AG04449 (cell line): ENCODE measurements at regions of chr15 and their contacts with region 1.

Region 1: GRCh38 chr15:67080900-67081431 is 15.6 kb downstream of the SMAD3 start:
- DNase-seq: no peak
- H3K4me3 ChIP-seq: no peak overlapping the region
- CTCF ChIP-seq: peak; percentile 38

Region 2: GRCh38 chr15:67068710-67069400 is 12.1 kb before region 1 on chr15:
- CTCF ChIA-PET with region 1: interaction called, 30 read pairs
- POLR2A ChIA-PET with region 1: interaction called, 4 read pairs
- DNase-seq: no peak
- H3K4me3 ChIP-seq: peak overlapping the region; percentile 92
- CTCF ChIP-seq: no peak

Region 3: DNA sequence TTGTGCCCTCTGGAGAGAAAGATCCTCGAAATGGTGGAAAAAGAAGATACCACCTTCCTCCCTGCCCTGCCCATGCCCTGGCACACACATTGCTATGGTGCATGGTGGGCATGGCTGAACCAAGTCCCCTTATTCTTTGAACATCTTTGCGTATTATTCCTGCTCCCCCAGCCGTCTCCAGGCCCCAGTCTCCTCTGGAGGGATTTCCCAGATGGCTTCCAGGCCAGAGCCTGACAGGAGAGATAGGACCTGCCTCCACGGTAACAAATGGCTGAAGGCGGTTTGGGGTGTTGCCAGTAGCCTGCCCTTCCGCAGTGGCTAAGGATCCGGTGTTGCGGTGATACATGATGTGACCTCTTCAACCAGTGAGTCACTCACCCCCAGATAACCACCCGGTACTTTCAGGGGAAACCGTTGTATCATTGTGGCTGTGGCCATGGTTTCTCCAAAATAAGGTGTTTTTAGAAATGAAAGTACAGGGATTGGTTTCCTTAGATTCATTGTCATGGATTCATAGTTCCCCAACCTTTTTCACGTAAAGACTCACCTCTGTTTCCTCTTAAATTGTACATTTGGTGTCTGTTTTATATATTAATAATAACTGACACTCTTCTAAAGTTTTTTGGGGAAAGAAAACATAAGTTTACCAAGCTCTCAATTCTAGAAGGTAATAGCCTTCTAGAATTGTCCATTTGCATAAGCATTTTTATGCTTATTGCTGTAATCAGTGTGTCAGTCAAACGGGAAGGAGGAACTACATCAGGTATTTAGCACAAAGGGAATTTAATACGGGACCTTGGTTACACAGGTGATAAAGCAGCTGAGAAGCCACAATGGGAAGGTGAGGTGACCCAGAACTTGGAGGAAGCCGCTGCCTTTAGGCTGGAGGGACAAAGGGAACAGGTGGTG is 10.4 kb after region 1 on chr15:
- CTCF ChIA-PET with region 1: interaction called, 10 read pairs
- POLR2A ChIA-PET with region 1: no interaction called
- DNase-seq: no peak
- H3K4me3 ChIP-seq: no peak overlapping the region
- CTCF ChIP-seq: no peak